GM12878 (cell line): ENCODE measurements at regions of chr19 and their contacts with region 1.

Region 1: DNA sequence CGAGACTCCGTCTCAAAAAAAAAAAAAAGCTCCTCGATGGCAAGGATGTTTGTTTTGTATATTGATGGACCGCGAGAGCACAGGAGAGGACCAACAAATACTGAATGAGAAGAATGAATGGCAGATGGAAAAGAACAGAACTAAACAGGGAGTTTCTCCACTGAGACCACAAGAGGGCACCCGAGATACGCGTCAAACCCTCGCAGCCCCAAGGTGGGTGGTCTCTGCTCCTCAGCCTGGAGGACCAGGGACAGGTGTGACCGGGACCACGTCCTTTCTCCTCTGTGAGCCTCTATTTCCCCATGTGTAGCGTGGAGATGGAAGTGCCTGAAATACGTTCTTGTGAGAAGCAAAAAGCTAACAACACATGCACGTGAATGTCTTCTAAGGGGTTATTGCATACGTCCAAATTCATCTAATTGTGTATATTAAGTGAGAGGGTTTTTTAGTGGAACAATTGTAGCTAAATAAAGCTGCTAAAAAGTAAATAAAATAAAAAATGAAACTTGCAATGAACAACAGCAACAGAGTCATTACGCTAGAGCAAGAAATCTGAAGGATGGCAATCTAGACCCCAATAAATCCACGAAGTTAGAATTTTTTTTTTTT is 8.3 kb upstream of the CDC42EP5 start:
- DNase-seq: no peak
- ATAC-seq: peak; percentile 69
- H3K4me3 ChIP-seq: no peak overlapping the region
- H3K27ac ChIP-seq: no peak overlapping the region
- H3K4me1 ChIP-seq: peaks cover 12% of the 10 kb centered on the region
- H3K27me3 ChIP-seq: no peaks in the 10 kb centered on the region; a peak in 1 of 4 replicates
- CTCF ChIP-seq: peak; percentile 61 to 74 (median 69)
- EP300 ChIP-seq: no peak
- POLR2A ChIP-seq: no peak
- RAD21 ChIP-seq: peak; percentile 83

Region 2: GRCh38 chr19:54316746-54317107 is 164.7 kb before region 1 on chr19:
- CTCF ChIA-PET with region 1: no interaction called
- POLR2A ChIA-PET with region 1: no interaction called
- RAD21 ChIA-PET with region 1: no interaction called
- SMC1A ChIA-PET with region 1: no interaction called
- in situ Hi-C with region 1: no loop called
- intact Hi-C with region 1: no loop called
- DNase-seq: no peak
- ATAC-seq: no peak
- H3K4me3 ChIP-seq: no peak overlapping the region
- H3K27ac ChIP-seq: no peak overlapping the region
- H3K4me1 ChIP-seq: no peaks in the 10 kb centered on the region
- H3K27me3 ChIP-seq: no peaks in the 10 kb centered on the region
- CTCF ChIP-seq: no peak
- EP300 ChIP-seq: no peak
- POLR2A ChIP-seq: no peak
- RAD21 ChIP-seq: no peak

Region 3: GRCh38 chr19:54517483-54517882 is 36.1 kb after region 1 on chr19:
- CTCF ChIA-PET with region 1: interaction called, 10 read pairs
- POLR2A ChIA-PET with region 1: no interaction called
- RAD21 ChIA-PET with region 1: interaction called, 4 read pairs
- SMC1A ChIA-PET with region 1: interaction called, 3 read pairs
- in situ Hi-C with region 1: no loop called
- intact Hi-C with region 1: loop called (anchors 5 kb)
- DNase-seq: no peak
- ATAC-seq: peak; percentile 35; the same call in 2 of the 3 replicates
- H3K4me3 ChIP-seq: no peak overlapping the region
- H3K27ac ChIP-seq: no peak overlapping the region
- H3K4me1 ChIP-seq: peaks cover 38% of the 10 kb centered on the region
- H3K27me3 ChIP-seq: peaks cover 0 to 1% of the 10 kb centered on the region in 2 experiments; a peak in 1 of 4 replicates
- CTCF ChIP-seq: no peak
- EP300 ChIP-seq: no peak
- POLR2A ChIP-seq: no peak
- RAD21 ChIP-seq: no peak

Region 4: GRCh38 chr19:54616821-54617560 is 135.6 kb after region 1 on chr19:
- CTCF ChIA-PET with region 1: interaction called, 15 read pairs
- POLR2A ChIA-PET with region 1: interaction called, 3 read pairs
- RAD21 ChIA-PET with region 1: interaction called, 6 read pairs
- SMC1A ChIA-PET with region 1: interaction called, 8 read pairs
- in situ Hi-C with region 1: no loop called
- intact Hi-C with region 1: loop called (anchors 2 kb)
- DNase-seq: peak; percentile 93
- ATAC-seq: peak; percentile 90
- H3K4me3 ChIP-seq: peak overlapping the region; percentile 96
- H3K27ac ChIP-seq: peak overlapping the region; percentile 98
- H3K4me1 ChIP-seq: peaks cover 13% of the 10 kb centered on the region
- H3K27me3 ChIP-seq: no peaks in the 10 kb centered on the region
- CTCF ChIP-seq: no peak
- EP300 ChIP-seq: peak; percentile 91 to 94
- POLR2A ChIP-seq: no peak; the same call in 1 of the 2 replicates
- RAD21 ChIP-seq: 0 out of 2 replicates have a peak, but pooled peaks have one; percentile 5

Region 5: GRCh38 chr19:54662730-54663129 is 181.3 kb after region 1 on chr19 and contains the start of gene LILRB4:
- CTCF ChIA-PET with region 1: interaction called, 236 read pairs
- POLR2A ChIA-PET with region 1: no interaction called
- RAD21 ChIA-PET with region 1: no interaction called
- SMC1A ChIA-PET with region 1: interaction called, 11 read pairs
- in situ Hi-C with region 1: no loop called
- intact Hi-C with region 1: no loop called
- DNase-seq: no peak
- ATAC-seq: peak; percentile 79
- H3K4me3 ChIP-seq: peak within 1 kb of the TSS; percentile 49
- H3K27ac ChIP-seq: peak within 1 kb of the TSS; percentile 57
- H3K4me1 ChIP-seq: peaks cover 34% of the 10 kb centered on the region
- H3K27me3 ChIP-seq: no peaks in the 10 kb centered on the region
- CTCF ChIP-seq: no peak
- EP300 ChIP-seq: no peak
- POLR2A ChIP-seq: no peak; the same call in 1 of the 2 replicates
- RAD21 ChIP-seq: no peak
- polyA plus RNA-seq, gene LILRB4: 2.0 to 4.9 TPM

Region 6: DNA sequence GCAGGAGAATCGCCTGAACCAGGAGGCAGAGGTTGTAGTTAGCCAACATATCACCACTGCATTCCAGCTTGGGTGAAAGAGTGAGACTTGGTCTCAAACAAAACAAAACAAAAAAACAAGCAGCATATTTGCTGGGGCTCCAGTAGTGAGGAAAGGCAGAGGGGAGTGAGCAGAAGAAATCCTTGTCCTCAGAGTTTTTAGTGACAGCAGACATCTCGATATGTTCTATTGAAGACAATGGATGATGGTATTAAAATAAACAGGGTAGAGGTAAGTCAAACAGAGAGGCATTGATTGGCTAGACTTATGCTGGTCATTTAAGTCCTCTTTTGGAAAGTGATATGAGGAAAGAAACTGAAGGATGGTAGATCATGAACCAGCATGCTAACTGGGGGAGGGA is 446.9 kb after region 1 on chr19:
- CTCF ChIA-PET with region 1: no interaction called
- POLR2A ChIA-PET with region 1: no interaction called
- RAD21 ChIA-PET with region 1: no interaction called
- SMC1A ChIA-PET with region 1: no interaction called
- in situ Hi-C with region 1: loop called (anchors 10 kb)
- intact Hi-C with region 1: no loop called
- DNase-seq: no peak
- ATAC-seq: no peak
- H3K4me3 ChIP-seq: no peak overlapping the region
- H3K27ac ChIP-seq: no peak overlapping the region
- H3K4me1 ChIP-seq: no peaks in the 10 kb centered on the region; the same call in 1 of the 2 replicates
- H3K27me3 ChIP-seq: no peaks in the 10 kb centered on the region
- CTCF ChIP-seq: no peak
- EP300 ChIP-seq: no peak
- POLR2A ChIP-seq: no peak
- RAD21 ChIP-seq: no peak